ENCODE measurements at regions of chr1 and their contacts with region 1.

Region 1: GRCh38 chr1:234065794-234066447 is 161.4 kb downstream of the SLC35F3 start:
- DNase-seq: peak; percentile 79 to 80 (median 79)
- ATAC-seq: peak; percentile 81 to 86 (median 86)
- H3K4me3 ChIP-seq: no peak overlapping the region
- H3K27ac ChIP-seq: no peak overlapping the region
- H3K4me1 ChIP-seq: no peaks in the 10 kb centered on the region
- H3K27me3 ChIP-seq: no peaks in the 10 kb centered on the region
- CTCF ChIP-seq: peak; percentile 59 to 90 (median 85)
- POLR2A ChIP-seq: no peak

Region 2: GRCh38 chr1:233394860-233395717 is 670.8 kb before region 1 on chr1:
- intact Hi-C with region 1: loop called in 1 of 2 experiments (anchors 10 kb)
- DNase-seq: no peak
- ATAC-seq: peak; percentile 92 to 98 (median 92)
- H3K4me3 ChIP-seq: no peak overlapping the region
- H3K27ac ChIP-seq: no peak overlapping the region
- H3K4me1 ChIP-seq: no peaks in the 10 kb centered on the region
- H3K27me3 ChIP-seq: no peaks in the 10 kb centered on the region
- CTCF ChIP-seq: peak; percentile 78 to 85 (median 82)
- POLR2A ChIP-seq: no peak

Region 3: GRCh38 chr1:233844692-233845091 is 221.2 kb before region 1 on chr1:
- intact Hi-C with region 1: no loop called
- DNase-seq: no peak
- ATAC-seq: no peak
- H3K4me3 ChIP-seq: no peak overlapping the region
- H3K27ac ChIP-seq: no peak overlapping the region
- H3K4me1 ChIP-seq: peaks cover 0 to 2% (median 0%) of the 10 kb centered on the region in 4 donors
- H3K27me3 ChIP-seq: no peaks in the 10 kb centered on the region
- CTCF ChIP-seq: no peak
- POLR2A ChIP-seq: no peak

Region 4: GRCh38 chr1:233982827-233983518 is 82.9 kb before region 1 on chr1:
- intact Hi-C with region 1: no loop called
- DNase-seq: no peak
- ATAC-seq: no peak
- H3K4me3 ChIP-seq: no peak overlapping the region
- H3K27ac ChIP-seq: no peak overlapping the region
- H3K4me1 ChIP-seq: no peaks in the 10 kb centered on the region
- H3K27me3 ChIP-seq: no peaks in the 10 kb centered on the region
- CTCF ChIP-seq: no peak
- POLR2A ChIP-seq: no peak

Measured in right lobe of liver (tissue), 6 donors.